Caco-2 (cell line): ENCODE measurements at regions of chr22 and their contacts with region 1.

Region 1: GRCh38 chr22:23376256-23376655 is 195.9 kb downstream of the BCR start:
- DNase-seq: peak in 1 of 2 experiments; percentile 28
- H3K4me3 ChIP-seq: no peak overlapping the region
- H3K4me3 Mint-ChIP-seq: no peak overlapping the region
- H3K27ac Mint-ChIP-seq: no peak overlapping the region
- H3K4me1 ChIP-seq: no peaks in the 10 kb centered on the region
- H3K4me1 Mint-ChIP-seq: no peaks in the 10 kb centered on the region
- H3K27me3 ChIP-seq: no peaks in the 10 kb centered on the region
- H3K27me3 Mint-ChIP-seq: peaks cover 5% of the 10 kb centered on the region
- CTCF ChIP-seq: peak in 1 of 2 experiments; percentile 33

Region 2: GRCh38 chr22:23431337-23432072 is 55.2 kb after region 1 on chr22:
- CTCF ChIA-PET with region 1: no interaction called
- POLR2A ChIA-PET with region 1: no interaction called
- intact Hi-C with region 1: no loop called
- DNase-seq: no peak
- H3K4me3 ChIP-seq: no peak overlapping the region
- H3K4me3 Mint-ChIP-seq: no peak overlapping the region
- H3K27ac Mint-ChIP-seq: no peak overlapping the region
- H3K4me1 ChIP-seq: no peaks in the 10 kb centered on the region
- H3K4me1 Mint-ChIP-seq: no peaks in the 10 kb centered on the region
- H3K27me3 ChIP-seq: no peaks in the 10 kb centered on the region
- H3K27me3 Mint-ChIP-seq: no peaks in the 10 kb centered on the region
- CTCF ChIP-seq: no peak

Region 3: GRCh38 chr22:23832226-23833002 is 456.2 kb after region 1 on chr22:
- CTCF ChIA-PET with region 1: interaction called, 13 read pairs
- POLR2A ChIA-PET with region 1: no interaction called
- intact Hi-C with region 1: no loop called
- DNase-seq: peak in 1 of 2 experiments; percentile 26
- H3K4me3 ChIP-seq: no peak overlapping the region
- H3K4me3 Mint-ChIP-seq: no peak overlapping the region
- H3K27ac Mint-ChIP-seq: no peak overlapping the region
- H3K4me1 ChIP-seq: no peaks in the 10 kb centered on the region
- H3K4me1 Mint-ChIP-seq: no peaks in the 10 kb centered on the region
- H3K27me3 ChIP-seq: no peaks in the 10 kb centered on the region
- H3K27me3 Mint-ChIP-seq: no peaks in the 10 kb centered on the region
- CTCF ChIP-seq: no peak